ENCODE measurements at regions of chr14 and their contacts with region 1.

Region 1: GRCh38 chr14:74257078-74257989 is 18.1 kb downstream of the VSX2 start:
- DNase-seq: peak in 1 of 2 donors; percentile 85
- ATAC-seq: peak; percentile 90
- H3K4me3 ChIP-seq: peak overlapping the region; percentile 63 to 89
- H3K27ac ChIP-seq: no peak overlapping the region
- H3K4me1 ChIP-seq: no peaks in the 10 kb centered on the region
- H3K27me3 ChIP-seq: no peaks in the 10 kb centered on the region

Region 2: GRCh38 chr14:74109369-74109768 is 148.0 kb before region 1 on chr14:
- intact Hi-C with region 1: loop called (anchors 2 to 10 kb)
- DNase-seq: no peak
- ATAC-seq: no peak
- H3K4me3 ChIP-seq: no peak overlapping the region
- H3K27ac ChIP-seq: no peak overlapping the region
- H3K4me1 ChIP-seq: no peaks in the 10 kb centered on the region
- H3K27me3 ChIP-seq: no peaks in the 10 kb centered on the region

Region 3: DNA sequence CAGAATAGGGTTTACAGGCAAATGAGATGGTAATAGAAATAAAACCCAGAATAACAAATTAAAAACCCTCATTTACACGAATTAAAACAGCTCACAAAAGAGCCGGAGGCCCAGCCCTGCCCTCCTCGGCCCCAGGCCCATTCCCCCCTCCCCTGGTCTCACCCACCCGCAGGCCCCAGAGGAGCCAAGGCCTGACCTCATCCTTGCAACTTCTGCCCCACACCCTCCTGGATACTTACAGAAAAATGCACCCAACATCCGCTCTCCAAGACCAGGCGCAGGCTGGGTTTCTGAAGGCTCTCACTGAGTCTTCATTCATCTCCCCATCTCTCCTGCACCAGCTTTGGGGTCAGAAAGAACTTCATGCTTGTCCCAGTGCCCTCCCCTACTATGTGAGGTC is 34.3 kb before region 1 on chr14:
- intact Hi-C with region 1: loop called (anchors 5 kb)
- DNase-seq: no peak
- ATAC-seq: no peak
- H3K4me3 ChIP-seq: no peak overlapping the region
- H3K27ac ChIP-seq: no peak overlapping the region
- H3K4me1 ChIP-seq: no peaks in the 10 kb centered on the region
- H3K27me3 ChIP-seq: no peaks in the 10 kb centered on the region

Region 4: DNA sequence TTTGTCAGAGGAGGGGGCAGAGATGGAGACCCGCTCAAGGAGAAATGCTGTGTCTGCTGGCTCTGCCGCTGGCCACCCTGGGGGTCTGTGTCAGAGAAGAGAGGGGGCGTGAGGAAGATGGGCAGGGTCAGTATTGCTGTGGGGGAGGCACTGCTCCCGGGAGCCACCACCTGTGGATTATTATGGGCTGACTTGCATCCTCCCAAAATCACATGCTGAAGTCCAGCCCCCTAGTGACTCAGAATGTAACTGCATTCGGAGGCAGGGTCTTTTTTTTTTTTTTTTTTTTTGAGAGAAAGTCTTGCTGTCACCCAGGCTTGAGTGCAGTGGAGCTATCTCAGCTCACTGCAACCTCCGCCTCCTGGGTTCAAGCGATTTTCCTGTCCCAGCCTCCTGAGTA is 33.1 kb after region 1 on chr14:
- intact Hi-C with region 1: no loop called
- DNase-seq: no peak
- ATAC-seq: no peak
- H3K4me3 ChIP-seq: no peak overlapping the region
- H3K27ac ChIP-seq: no peak overlapping the region
- H3K4me1 ChIP-seq: no peaks in the 10 kb centered on the region
- H3K27me3 ChIP-seq: no peaks in the 10 kb centered on the region

Region 5: DNA sequence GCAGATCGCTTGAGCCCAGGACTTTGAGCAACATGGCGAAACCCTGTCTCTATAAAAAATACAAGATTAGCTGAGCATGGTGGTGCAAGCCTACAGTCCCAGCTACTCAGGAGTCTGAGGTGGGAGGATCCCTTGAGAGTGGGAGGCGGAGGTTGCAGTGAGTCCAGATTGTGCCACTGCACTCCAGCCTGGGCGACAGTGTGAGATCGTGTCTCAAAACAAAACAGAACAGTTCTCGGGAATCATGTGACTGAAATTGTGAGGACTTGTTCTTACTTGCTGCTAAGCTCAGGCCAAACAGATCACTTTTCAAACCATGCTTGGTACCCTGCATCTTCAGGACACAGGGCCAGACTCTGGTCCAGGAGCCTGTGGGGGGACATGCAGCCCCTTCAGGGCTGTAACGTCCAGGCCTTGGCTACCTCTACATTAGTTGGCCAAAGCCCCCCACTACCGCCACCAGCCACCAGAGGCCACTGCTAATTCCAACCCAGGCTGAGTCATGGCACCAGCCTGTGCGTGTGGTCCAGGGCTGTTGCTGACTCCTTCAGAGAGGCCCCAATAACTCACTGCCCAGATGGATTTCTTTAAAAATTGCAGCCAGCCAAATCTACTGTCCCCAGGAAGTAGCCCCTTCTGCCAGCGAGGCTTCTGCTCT is 202.1 kb after region 1 on chr14:
- intact Hi-C with region 1: no loop called
- DNase-seq: peak in 1 of 2 donors; percentile 57
- ATAC-seq: peak; percentile 59
- H3K4me3 ChIP-seq: no peak overlapping the region
- H3K27ac ChIP-seq: no peak overlapping the region
- H3K4me1 ChIP-seq: no peaks in the 10 kb centered on the region
- H3K27me3 ChIP-seq: no peaks in the 10 kb centered on the region

Measured in aorta (tissue), 5 donors.